Right lobe of liver (tissue), 6 donors: ENCODE measurements at regions of chr21 and their contacts with region 1.

Region 1: GRCh38 chr21:35333831-35334618 is 284.9 kb upstream of the RUNX1 start:
- DNase-seq: no peak
- ATAC-seq: no peak
- H3K4me3 ChIP-seq: no peak overlapping the region
- H3K27ac ChIP-seq: no peak overlapping the region
- H3K4me1 ChIP-seq: no peaks in the 10 kb centered on the region
- H3K27me3 ChIP-seq: no peaks in the 10 kb centered on the region
- CTCF ChIP-seq: no peak
- POLR2A ChIP-seq: no peak

Region 2: DNA sequence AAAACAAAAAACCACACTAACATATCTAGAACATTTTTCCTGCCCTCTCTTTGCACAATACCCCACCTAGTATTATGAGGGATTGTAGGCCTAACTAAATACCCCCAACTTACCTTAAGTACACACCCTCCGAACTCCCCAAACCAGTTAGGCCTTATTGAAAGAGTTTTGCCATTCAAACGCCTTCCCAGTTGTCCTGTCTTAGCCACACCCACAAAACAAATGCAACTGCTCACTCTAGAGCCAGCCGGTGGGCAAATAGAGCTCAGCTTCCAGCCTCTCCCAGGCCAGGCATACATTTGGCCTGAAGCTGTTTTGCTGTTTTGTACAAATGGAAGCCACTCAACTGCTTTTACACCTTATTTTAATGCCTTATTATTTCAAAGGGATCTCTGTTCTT is 60.7 kb before region 1 on chr21:
- intact Hi-C with region 1: loop called in 1 of 2 experiments (anchors 10 kb)
- DNase-seq: no peak
- ATAC-seq: no peak
- H3K4me3 ChIP-seq: no peak overlapping the region
- H3K27ac ChIP-seq: no peak overlapping the region
- H3K4me1 ChIP-seq: no peaks in the 10 kb centered on the region
- H3K27me3 ChIP-seq: no peaks in the 10 kb centered on the region
- CTCF ChIP-seq: no peak
- POLR2A ChIP-seq: no peak